Activated CD4-positive, alpha-beta T cell treated with anti-CD3 and anti-CD28 coated beads for 36 hours (primary cell): ENCODE measurements at regions of chr3 and their contacts with region 1.

Region 1: DNA sequence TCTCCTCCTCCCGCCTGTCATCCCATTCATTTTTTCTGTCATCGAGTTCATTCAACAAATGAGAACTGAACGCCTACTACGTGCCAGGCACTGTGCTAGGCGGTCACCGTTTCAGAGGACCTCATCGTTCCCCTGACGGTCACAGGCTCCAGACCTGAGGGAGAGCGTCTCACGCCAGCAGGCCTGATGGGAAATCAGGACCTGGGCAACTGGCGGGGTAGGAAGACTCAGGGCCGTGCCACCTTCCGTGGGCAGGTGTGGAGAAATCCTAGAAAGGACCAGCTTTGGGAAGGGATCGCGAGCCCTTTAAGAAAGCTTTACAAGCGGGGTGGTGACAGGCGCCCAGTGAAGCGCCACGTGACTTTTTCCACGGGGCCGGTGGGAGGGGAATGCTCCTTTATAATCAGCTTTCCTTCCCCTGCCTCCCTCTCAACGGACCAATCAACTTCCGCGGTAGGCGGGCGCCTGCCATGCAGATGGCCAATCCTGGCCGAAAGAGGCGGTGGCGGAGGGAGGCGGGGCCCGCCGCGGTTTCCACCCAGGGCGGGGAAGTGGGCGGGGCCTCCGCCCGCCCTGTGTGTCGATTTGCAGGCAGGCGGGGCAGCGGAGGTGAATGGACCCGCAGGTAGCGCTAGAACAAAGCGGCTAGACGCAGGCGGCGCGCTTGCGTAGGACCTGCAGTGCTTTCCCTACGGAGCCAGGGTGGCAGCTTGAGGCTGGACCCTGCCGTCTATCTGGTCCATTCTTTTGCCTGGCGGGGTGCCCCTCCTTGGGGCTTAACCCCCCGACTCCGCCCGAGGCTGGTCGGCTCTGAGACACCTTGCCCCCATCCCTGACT is 816 bp upstream of the DUSP7 start:
- DNase-seq: peak; percentile 100
- ATAC-seq: peak; percentile 81
- H3K4me3 Mint-ChIP-seq: peak overlapping the region; percentile 85
- H3K27ac Mint-ChIP-seq: peak overlapping the region; percentile 93
- H3K4me1 Mint-ChIP-seq: peaks cover 30% of the 10 kb centered on the region
- H3K27me3 Mint-ChIP-seq: no peaks in the 10 kb centered on the region

Region 2: DNA sequence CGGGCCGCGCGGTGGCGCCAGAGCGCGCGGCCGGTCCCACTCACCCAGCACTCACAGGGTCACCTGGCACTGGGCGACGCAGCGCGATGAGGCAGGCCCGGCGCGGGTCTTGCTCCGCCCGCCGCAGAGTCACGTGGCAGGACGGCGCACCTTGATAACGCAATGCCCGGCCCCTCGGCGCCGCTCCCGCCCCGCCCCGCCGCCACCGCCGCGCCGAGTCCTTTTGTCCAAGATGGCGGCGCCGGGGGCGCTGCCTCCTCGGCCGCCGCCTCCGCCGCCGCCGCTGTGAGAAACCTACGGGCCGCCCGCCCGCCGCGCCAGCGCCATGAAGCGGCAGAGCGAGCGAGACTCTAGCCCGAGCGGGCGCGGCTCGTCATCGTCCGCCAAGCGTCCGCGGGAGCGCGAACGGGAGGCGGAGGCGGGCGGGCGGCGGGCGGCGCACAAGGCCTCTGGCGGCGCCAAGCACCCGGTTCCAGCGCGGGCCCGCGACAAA is 666.1 kb before region 1 on chr3 and contains the start of gene RBM15B:
- CTCF ChIA-PET with region 1: no interaction called
- POLR2A ChIA-PET with region 1: no interaction called
- intact Hi-C with region 1: loop called in 1 of 2 experiments (anchors 5 kb)
- DNase-seq: peak; percentile 99
- ATAC-seq: peak; percentile 96
- H3K4me3 Mint-ChIP-seq: peak within 1 kb of the TSS; percentile 81
- H3K27ac Mint-ChIP-seq: peak within 1 kb of the TSS; percentile 89
- H3K4me1 Mint-ChIP-seq: peaks cover 70% of the 10 kb centered on the region
- H3K27me3 Mint-ChIP-seq: no peaks in the 10 kb centered on the region
- total RNA-seq, gene RBM15B: 20.9 to 21.5 TPM

Region 3: DNA sequence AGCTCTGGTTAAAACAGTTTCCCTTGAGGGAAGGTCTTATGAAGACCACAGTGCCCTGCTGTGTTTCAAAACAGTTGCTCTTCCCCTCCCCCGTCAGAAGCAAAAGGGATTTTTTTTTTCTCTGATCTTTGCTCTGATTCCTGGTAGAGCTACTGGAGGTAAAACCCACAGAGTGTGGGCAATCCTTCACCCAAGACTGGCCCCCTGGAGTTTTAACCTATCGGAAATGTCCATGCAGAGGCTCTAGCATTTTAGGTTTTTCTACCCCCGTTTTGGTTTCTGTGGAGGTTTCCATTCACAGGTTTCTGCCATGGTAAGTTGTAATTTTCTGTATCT is 322.6 kb before region 1 on chr3:
- CTCF ChIA-PET with region 1: no interaction called
- POLR2A ChIA-PET with region 1: no interaction called
- intact Hi-C with region 1: no loop called
- DNase-seq: peak; percentile 39
- ATAC-seq: peak; percentile 84
- H3K4me3 Mint-ChIP-seq: no peak overlapping the region
- H3K27ac Mint-ChIP-seq: no peak overlapping the region
- H3K4me1 Mint-ChIP-seq: peaks cover 22% of the 10 kb centered on the region
- H3K27me3 Mint-ChIP-seq: peaks cover 13% of the 10 kb centered on the region

Region 4: DNA sequence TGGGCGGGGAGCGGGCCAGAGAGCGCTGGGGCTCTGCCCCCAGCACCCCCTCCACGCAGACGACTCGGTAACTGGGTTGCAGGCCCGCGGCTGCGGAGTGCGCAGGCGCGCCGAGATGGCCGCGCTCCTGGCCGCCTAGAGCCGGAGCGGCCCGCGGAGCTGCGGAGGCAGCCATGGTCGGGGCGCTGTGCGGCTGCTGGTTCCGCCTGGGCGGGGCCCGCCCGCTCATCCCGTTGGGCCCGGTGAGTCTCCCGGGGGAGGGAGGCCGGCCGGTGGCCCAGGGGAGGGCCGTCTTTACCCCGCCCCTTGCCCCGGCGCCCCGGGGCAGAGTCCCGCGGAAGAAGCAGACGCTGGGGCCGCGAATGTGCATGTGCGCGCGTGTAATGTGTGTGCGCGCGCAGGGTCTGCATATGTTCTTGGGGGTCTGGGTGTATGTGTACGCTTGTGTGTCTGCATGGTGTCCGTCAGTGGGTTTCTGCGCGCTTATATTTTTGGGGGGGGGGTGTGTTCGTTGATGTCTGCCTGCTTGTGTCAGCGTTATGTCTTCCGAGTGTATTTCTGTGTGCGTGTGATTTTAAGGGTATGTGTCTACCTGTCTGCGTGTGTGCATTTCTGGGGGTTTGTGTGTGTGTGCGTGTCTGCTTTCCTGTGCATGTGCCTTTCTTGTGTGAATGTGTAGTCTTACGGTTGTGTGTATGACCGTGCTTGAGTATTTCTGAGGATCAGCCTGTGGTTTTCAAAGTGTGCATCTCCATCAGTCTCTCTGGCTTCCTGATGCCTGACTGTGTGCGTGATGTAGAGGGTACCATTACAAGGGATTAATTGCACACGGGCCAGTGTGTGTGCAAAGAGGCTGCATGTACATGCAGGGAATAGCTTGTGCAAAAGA is 82.0 kb before region 1 on chr3 and contains the start of gene ABHD14A:
- CTCF ChIA-PET with region 1: interaction called, 4 read pairs
- POLR2A ChIA-PET with region 1: no interaction called
- intact Hi-C with region 1: loop called in 1 of 2 experiments (anchors 1 kb)
- DNase-seq: peak; percentile 81
- ATAC-seq: peak; percentile 70
- H3K4me3 Mint-ChIP-seq: peak within 1 kb of the TSS; percentile 97
- H3K27ac Mint-ChIP-seq: peak within 1 kb of the TSS; percentile 97
- H3K4me1 Mint-ChIP-seq: peaks cover 34% of the 10 kb centered on the region
- H3K27me3 Mint-ChIP-seq: no peaks in the 10 kb centered on the region
- total RNA-seq, gene ABHD14A: 6.3 to 7.5 TPM

Region 5: DNA sequence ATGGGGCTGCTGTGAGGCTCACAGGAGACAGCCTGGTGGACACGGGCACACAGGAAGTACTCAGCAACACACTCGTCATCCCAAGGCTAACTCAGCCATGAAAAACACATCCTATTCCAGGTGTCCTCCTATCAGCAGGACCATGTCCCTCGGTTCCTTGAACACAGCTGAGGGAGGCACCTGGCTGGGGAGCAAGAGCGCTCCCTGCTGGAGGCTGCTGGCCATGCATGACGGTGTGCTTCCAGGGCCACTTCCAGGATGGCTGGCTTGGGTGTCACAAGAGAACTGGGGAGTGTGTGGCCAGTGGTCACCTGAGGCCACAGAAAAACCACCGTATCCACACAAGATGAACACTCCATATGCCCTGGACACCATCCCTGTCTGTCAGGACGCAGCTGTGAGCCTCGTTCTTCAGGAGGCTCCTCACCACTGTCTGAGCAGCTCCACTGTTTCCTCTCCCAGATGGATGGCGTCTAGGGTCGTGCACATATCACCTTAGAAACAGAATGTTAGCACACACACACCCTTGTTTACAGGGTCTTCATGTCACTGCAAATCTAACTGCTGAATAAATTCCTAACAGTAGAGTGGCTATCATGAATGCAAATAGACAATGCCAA is 66.0 kb after region 1 on chr3:
- CTCF ChIA-PET with region 1: interaction called, 7 read pairs
- POLR2A ChIA-PET with region 1: interaction called, 3 read pairs
- intact Hi-C with region 1: loop called in 1 of 2 experiments (anchors 2 kb)
- DNase-seq: peak; percentile 83
- ATAC-seq: peak; percentile 93
- H3K4me3 Mint-ChIP-seq: no peak overlapping the region
- H3K27ac Mint-ChIP-seq: no peak overlapping the region
- H3K4me1 Mint-ChIP-seq: peaks cover 6% of the 10 kb centered on the region
- H3K27me3 Mint-ChIP-seq: no peaks in the 10 kb centered on the region

Region 6: GRCh38 chr3:52238761-52239701 is 181.8 kb after region 1 on chr3 and contains the start of gene TWF2:
- CTCF ChIA-PET with region 1: no interaction called
- POLR2A ChIA-PET with region 1: no interaction called
- intact Hi-C with region 1: loop called in 1 of 2 experiments (anchors 1 kb)
- DNase-seq: peak; percentile 92
- ATAC-seq: peak; percentile 67
- H3K4me3 Mint-ChIP-seq: peak within 1 kb of the TSS; percentile 99
- H3K27ac Mint-ChIP-seq: peak within 1 kb of the TSS; percentile 99
- H3K4me1 Mint-ChIP-seq: peaks cover 70% of the 10 kb centered on the region
- H3K27me3 Mint-ChIP-seq: no peaks in the 10 kb centered on the region
- total RNA-seq, gene TWF2: 85.0 to 93.5 TPM

Region 7: GRCh38 chr3:52536369-52537164 is 479.4 kb after region 1 on chr3 and contains the start of gene UQCC5:
- CTCF ChIA-PET with region 1: no interaction called
- POLR2A ChIA-PET with region 1: no interaction called
- intact Hi-C with region 1: loop called in 1 of 2 experiments (anchors 1 kb)
- DNase-seq: peak; percentile 99
- ATAC-seq: peak; percentile 91
- H3K4me3 Mint-ChIP-seq: peak within 1 kb of the TSS; percentile 100
- H3K27ac Mint-ChIP-seq: peak within 1 kb of the TSS; percentile 99
- H3K4me1 Mint-ChIP-seq: peaks cover 49% of the 10 kb centered on the region
- H3K27me3 Mint-ChIP-seq: no peaks in the 10 kb centered on the region
- total RNA-seq, gene UQCC5: 12.0 to 12.7 TPM

Region 8: DNA sequence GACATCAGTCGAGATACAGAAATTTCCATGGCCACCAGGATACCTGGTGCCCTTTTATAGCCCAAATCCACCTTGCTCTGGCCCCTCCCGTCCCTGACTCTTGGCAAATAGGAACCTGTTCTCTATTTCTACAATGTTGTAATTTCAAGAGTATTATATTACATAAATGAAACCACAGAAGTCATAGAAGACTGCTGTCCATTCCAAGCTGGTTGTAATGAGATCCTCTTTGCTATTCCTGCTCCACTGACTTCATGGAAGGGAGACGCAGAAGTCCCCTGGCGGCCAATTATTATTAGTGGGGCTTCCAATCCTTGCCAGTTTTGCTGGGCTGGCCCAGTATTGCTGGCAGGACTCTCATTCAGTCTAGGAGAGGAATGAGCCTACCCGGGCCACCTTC is 1263.5 kb after region 1 on chr3:
- CTCF ChIA-PET with region 1: no interaction called
- POLR2A ChIA-PET with region 1: no interaction called
- intact Hi-C with region 1: no loop called
- DNase-seq: no peak
- ATAC-seq: no peak
- H3K4me3 Mint-ChIP-seq: no peak overlapping the region
- H3K27ac Mint-ChIP-seq: no peak overlapping the region
- H3K4me1 Mint-ChIP-seq: peaks cover 12% of the 10 kb centered on the region
- H3K27me3 Mint-ChIP-seq: no peaks in the 10 kb centered on the region